HepG2 (cell line): ENCODE measurements at regions of chr2 and their contacts with region 1.

Region 1: DNA sequence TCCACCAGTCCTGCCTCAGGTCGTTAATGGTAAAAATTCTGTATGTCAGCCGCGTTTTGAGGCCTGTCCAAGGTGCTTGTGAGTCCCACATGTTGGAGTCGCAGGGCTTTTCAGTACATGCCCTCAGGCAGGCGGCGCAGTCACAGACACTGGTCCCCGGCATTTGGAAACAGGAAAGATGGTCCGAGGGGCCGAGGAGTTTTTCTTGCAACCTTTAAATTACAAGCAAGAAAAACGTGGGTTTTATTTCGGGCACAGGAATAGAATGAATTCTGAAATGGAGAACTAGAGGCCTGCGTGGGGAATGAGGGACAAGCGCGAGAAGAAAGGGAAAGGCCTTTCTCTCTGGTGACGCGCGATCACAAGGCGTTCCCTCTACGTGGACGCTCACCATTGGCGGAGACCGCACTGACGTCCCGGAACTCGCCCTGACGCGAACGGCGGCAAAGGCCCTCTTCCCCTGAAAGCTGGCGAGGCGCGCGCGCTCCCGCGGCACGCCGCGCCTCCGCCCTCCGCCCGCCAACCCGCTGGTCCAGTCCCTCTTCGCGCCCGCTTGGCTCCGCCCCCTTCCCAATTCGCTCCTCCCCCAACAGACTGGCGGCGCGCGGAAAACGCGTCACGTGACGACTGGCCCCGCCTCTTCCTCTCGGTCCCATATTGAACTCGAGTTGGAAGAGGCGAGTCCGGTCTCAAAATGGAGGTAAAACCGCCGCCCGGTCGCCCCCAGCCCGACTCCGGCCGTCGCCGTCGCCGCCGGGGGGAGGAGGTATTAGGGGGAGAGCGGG is at the start of gene HNRNPA3:
- DNase-seq: peak; percentile 98
- ATAC-seq: peak; percentile 93
- H3K4me3 ChIP-seq: peak within 1 kb of the TSS; percentile 85 to 86 (median 86)
- H3K27ac ChIP-seq: peak within 1 kb of the TSS; percentile 99
- H3K4me1 ChIP-seq: peaks cover 52% of the 10 kb centered on the region
- H3K27me3 ChIP-seq: no peaks in the 10 kb centered on the region; a peak in 1 of 5 replicates
- CTCF ChIP-seq: peak; percentile 48
- EP300 ChIP-seq: no peak; a peak in 1 of 4 replicates
- POLR2A ChIP-seq: peak; percentile 84 to 98
- RAD21 ChIP-seq: peak; percentile 38; the same call in 1 of the 2 replicates
- total RNA-seq, gene HNRNPA3: 97.7 and 164 TPM in 2 replicates

Region 2: GRCh38 chr2:176999301-176999700 is 213.0 kb before region 1 on chr2:
- CTCF ChIA-PET with region 1: no interaction called
- POLR2A ChIA-PET with region 1: no interaction called
- in situ Hi-C with region 1: no loop called
- intact Hi-C with region 1: no loop called
- DNase-seq: no peak
- ATAC-seq: no peak
- H3K4me3 ChIP-seq: no peak overlapping the region
- H3K27ac ChIP-seq: no peak overlapping the region
- H3K4me1 ChIP-seq: peaks cover 10% of the 10 kb centered on the region; the same call in 1 of the 2 replicates
- H3K27me3 ChIP-seq: no peaks in the 10 kb centered on the region
- CTCF ChIP-seq: no peak
- EP300 ChIP-seq: no peak
- POLR2A ChIP-seq: no peak
- RAD21 ChIP-seq: no peak

Region 3: DNA sequence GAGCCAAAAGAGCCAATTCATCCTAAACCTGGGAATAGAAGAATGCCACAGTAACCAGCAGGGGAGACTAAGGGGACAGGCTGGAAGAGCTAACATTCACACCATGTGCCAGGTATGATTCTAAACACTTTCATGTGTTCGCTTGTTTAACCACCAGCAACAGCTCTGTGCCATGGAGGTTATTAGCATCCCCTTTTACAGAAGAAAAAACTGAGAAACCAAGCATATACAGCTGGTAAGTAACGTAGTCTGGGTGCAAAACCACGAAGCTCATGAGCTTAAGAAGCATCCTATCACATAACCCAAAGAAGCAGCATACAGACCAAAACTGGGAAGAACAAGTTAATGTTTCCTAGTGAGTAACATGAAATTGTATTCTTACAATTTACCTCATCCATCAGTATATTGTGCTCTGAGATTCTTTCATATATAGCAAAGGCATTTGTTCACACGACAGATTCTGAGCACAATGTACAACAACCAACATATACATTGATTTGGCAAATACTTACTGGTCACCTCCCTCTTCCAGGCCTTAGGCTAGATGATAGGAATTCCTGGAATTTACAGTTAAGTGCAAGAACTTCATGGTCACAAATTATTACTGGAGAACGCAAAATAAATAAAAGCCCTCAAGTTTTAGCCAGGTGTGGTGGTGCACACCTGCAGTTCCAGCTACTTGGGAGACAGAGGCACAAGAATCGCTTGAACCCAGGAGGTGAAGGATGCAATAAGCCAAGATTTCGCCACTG is 36.2 kb before region 1 on chr2:
- CTCF ChIA-PET with region 1: no interaction called
- POLR2A ChIA-PET with region 1: interaction called, 15 read pairs
- in situ Hi-C with region 1: no loop called
- intact Hi-C with region 1: no loop called
- DNase-seq: peak; percentile 70
- ATAC-seq: peak; percentile 83
- H3K4me3 ChIP-seq: no peak overlapping the region
- H3K27ac ChIP-seq: no peak overlapping the region
- H3K4me1 ChIP-seq: peaks cover 76% of the 10 kb centered on the region
- H3K27me3 ChIP-seq: no peaks in the 10 kb centered on the region
- CTCF ChIP-seq: no peak
- EP300 ChIP-seq: no peak
- POLR2A ChIP-seq: no peak
- RAD21 ChIP-seq: no peak

Region 4: DNA sequence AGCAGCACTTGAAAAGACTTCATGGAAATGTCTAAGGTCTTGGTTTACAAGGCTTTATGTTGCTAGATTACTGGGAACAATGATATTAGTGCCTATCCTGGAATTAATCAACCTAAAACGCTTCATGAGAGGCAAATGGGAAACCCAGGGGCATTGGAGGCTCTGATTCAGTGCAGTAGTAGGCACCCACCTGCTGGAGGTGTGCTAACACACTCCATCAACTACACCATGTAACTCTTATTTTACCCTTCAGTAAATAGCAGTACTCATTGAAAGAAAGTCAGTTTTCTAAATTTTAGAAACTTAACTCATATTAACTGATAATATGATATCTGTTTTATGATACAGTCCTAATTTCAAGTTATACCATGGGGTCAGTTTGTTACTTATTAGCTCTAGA is 17.1 kb before region 1 on chr2:
- CTCF ChIA-PET with region 1: no interaction called
- POLR2A ChIA-PET with region 1: interaction called, 61 read pairs
- in situ Hi-C with region 1: no loop called
- intact Hi-C with region 1: no loop called
- DNase-seq: no peak
- ATAC-seq: peak; percentile 91
- H3K4me3 ChIP-seq: no peak overlapping the region
- H3K27ac ChIP-seq: no peak overlapping the region
- H3K4me1 ChIP-seq: peaks cover 3% of the 10 kb centered on the region
- H3K27me3 ChIP-seq: no peaks in the 10 kb centered on the region
- CTCF ChIP-seq: peak; percentile 45
- EP300 ChIP-seq: no peak
- POLR2A ChIP-seq: no peak
- RAD21 ChIP-seq: no peak

Region 5: DNA sequence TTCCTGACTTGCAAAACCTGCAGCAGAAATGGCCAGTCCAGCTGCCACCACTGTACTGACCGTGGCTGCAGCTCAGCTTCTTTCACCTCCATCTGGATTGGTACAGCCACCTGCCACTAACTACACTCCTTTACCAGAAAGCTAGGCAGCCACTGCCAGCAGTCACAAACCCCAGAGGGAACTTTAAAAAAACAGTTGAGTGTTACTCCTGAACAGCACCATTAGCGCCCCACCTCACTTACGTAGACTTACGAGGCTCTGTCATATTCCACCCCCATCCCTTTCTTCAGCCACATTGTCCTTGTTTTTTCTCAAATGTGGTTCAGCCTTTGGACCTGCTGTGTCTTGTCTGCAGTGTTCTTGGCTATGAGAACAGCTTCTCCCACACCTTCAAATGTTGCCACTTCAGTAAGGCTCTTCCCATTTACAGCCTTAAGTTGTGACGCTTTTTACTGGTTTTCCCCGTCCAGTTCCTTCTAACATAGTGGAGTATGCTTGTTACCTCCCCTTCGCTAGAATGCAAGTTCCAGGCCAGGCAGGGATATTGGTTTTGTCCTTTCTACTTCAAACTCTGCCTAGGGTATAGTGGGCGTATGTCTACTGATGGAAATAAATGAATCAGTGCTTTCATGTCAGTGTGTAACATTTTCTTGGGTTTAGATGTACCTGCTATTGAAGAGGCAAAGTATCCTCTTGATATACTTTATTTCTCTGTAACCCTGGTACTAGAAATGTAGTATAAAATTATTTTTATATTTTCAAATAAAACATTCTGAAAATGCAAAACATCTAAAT is 17.3 kb after region 1 on chr2:
- CTCF ChIA-PET with region 1: no interaction called
- POLR2A ChIA-PET with region 1: interaction called, 28 read pairs
- in situ Hi-C with region 1: no loop called
- intact Hi-C with region 1: no loop called
- DNase-seq: no peak
- ATAC-seq: peak; percentile 12
- H3K4me3 ChIP-seq: no peak overlapping the region
- H3K27ac ChIP-seq: no peak overlapping the region
- H3K4me1 ChIP-seq: peaks cover 29% of the 10 kb centered on the region
- H3K27me3 ChIP-seq: no peaks in the 10 kb centered on the region
- CTCF ChIP-seq: no peak
- EP300 ChIP-seq: no peak
- POLR2A ChIP-seq: peak in 1 of 2 experiments; percentile 66; a peak in 2 of 4 replicates
- RAD21 ChIP-seq: no peak

Region 6: DNA sequence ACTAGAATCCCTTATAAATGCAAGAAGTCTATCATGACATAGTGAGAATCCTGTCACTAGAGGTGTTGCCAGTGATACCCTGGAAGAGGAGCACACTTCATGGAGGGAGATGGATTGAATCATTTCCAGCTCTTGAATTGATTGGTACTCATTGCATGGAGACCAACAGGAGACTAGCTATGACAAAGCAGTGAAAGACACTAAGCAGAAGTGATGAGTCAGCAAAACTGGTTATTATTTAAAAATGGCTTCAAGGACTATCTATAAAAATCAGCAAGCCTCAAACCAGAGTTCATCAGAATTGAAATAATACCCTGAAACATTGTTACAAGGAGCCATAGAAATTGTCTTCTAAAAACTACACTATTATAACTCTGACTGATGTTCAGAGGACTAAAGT is 660.0 kb after region 1 on chr2:
- CTCF ChIA-PET with region 1: no interaction called
- POLR2A ChIA-PET with region 1: no interaction called
- in situ Hi-C with region 1: no loop called
- intact Hi-C with region 1: no loop called
- DNase-seq: no peak
- ATAC-seq: no peak
- H3K4me3 ChIP-seq: no peak overlapping the region
- H3K27ac ChIP-seq: no peak overlapping the region
- H3K4me1 ChIP-seq: peaks cover 9% of the 10 kb centered on the region
- H3K27me3 ChIP-seq: no peaks in the 10 kb centered on the region
- CTCF ChIP-seq: no peak
- EP300 ChIP-seq: no peak
- POLR2A ChIP-seq: no peak
- RAD21 ChIP-seq: no peak